Dendritic cell treated with granulocyte-macrophage colony-stimulating factor and Interleukin-4, amounts not matched to agents 40 ng/mL and 50 ng/mL, for 4 days (primary cell): ENCODE measurements at regions of chr17 and their contacts with region 1.

Region 1: GRCh38 chr17:7136266-7136877 is 21.8 kb upstream of the ASGR2 start:
- H3K4me3 Mint-ChIP-seq: peak overlapping the region; percentile 63
- H3K27ac Mint-ChIP-seq: peak overlapping the region; percentile 89
- H3K4me1 Mint-ChIP-seq: peaks cover 79% of the 10 kb centered on the region
- H3K27me3 Mint-ChIP-seq: no peaks in the 10 kb centered on the region

Region 2: DNA sequence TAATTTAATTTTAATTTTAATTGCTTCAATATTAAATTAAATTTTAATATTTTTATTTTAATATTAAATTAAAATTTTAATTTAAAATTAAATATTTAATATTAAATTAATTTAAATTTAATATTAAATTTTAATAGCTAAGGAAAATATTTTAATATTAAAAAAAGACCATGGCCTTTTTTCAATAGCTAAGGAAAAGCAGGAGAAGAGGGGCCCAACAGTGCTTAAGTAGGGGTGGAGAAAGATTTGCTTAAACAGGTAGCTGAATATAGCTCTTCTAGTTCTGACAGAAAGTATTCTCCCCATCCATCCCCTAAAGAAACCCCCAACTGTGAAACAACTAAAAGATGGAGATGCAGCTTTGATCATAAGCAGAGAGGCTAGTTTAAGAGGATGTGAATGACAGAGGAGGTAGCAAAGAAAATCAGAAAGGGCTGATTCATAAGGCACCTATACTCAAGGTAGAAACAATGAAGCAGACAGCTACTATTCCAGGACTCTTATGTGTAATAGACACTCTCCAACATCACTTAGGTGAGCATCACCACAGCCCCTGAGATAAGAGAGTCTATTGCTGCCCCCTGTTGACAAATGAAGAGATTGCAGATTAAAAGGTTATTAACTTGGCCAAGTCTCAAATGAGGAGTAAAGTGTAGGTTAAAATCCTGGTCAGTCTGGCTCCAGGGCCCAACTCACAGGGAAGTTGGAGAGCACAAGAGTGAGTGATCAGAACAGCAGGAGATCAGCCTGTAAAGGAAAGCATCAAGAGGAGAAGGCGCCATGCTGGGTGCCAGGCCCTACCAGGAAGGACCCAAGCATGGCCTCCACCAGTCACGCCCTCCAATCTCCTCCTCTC is 131.7 kb before region 1 on chr17:
- intact Hi-C with region 1: no loop called
- H3K4me3 Mint-ChIP-seq: no peak overlapping the region
- H3K27ac Mint-ChIP-seq: no peak overlapping the region
- H3K4me1 Mint-ChIP-seq: peaks cover 55% of the 10 kb centered on the region
- H3K27me3 Mint-ChIP-seq: no peaks in the 10 kb centered on the region

Region 3: DNA sequence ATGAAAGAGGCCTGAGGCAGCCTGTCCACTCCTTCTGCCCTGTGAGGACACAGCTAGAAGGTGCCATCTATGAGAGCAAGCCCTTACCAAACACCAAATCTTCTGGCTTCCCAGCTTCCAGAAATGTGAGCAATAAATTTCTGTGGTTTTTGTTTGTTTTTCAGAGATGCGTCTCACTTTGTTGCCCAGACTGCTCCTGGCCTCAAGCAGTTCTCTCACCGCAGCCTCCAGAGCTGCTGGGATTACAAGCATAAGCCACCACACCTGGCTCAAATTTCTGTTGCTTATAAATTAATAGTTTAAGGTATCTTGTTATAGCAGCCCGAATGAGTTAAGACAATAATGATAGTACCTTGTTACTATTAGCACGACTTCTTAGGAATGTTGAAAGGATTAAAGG is 80.0 kb before region 1 on chr17:
- intact Hi-C with region 1: loop called (anchors 1 kb)
- H3K4me3 Mint-ChIP-seq: no peak overlapping the region
- H3K27ac Mint-ChIP-seq: no peak overlapping the region
- H3K4me1 Mint-ChIP-seq: peaks cover 32% of the 10 kb centered on the region
- H3K27me3 Mint-ChIP-seq: no peaks in the 10 kb centered on the region

Region 4: GRCh38 chr17:7081341-7082062 is 54.9 kb before region 1 on chr17:
- intact Hi-C with region 1: loop called (anchors 2 kb)
- H3K4me3 Mint-ChIP-seq: no peak overlapping the region
- H3K27ac Mint-ChIP-seq: no peak overlapping the region
- H3K4me1 Mint-ChIP-seq: peaks cover 69% of the 10 kb centered on the region
- H3K27me3 Mint-ChIP-seq: no peaks in the 10 kb centered on the region

Region 5: DNA sequence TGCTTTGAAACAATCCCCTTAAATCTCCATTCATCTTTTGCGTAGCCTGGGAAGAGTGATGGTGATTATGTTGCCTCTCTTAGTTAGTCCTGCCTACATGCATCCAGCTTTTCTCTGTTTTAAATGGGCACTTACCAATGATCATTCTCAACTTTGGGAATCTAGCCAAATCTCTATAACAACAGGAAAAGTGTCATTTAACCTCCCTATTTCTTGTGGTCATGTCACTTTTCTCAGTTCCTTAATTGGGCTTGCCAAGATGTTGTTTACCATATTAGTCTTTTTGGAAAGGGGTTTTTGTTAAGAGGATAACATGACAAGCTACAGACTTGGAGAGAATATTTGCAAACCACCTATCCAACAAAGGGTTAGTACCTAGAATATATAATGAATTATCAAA is 40.7 kb before region 1 on chr17:
- intact Hi-C with region 1: loop called (anchors 1 kb)
- H3K4me3 Mint-ChIP-seq: peak overlapping the region; percentile 56
- H3K27ac Mint-ChIP-seq: peak overlapping the region; percentile 92
- H3K4me1 Mint-ChIP-seq: peaks cover 83% of the 10 kb centered on the region
- H3K27me3 Mint-ChIP-seq: no peaks in the 10 kb centered on the region

Region 6: GRCh38 chr17:7114875-7115614 is 21.3 kb before region 1 on chr17:
- intact Hi-C with region 1: loop called (anchors 2 kb)
- H3K4me3 Mint-ChIP-seq: peak overlapping the region; percentile 71
- H3K27ac Mint-ChIP-seq: no peak overlapping the region
- H3K4me1 Mint-ChIP-seq: peaks cover 35% of the 10 kb centered on the region
- H3K27me3 Mint-ChIP-seq: no peaks in the 10 kb centered on the region

Region 7: DNA sequence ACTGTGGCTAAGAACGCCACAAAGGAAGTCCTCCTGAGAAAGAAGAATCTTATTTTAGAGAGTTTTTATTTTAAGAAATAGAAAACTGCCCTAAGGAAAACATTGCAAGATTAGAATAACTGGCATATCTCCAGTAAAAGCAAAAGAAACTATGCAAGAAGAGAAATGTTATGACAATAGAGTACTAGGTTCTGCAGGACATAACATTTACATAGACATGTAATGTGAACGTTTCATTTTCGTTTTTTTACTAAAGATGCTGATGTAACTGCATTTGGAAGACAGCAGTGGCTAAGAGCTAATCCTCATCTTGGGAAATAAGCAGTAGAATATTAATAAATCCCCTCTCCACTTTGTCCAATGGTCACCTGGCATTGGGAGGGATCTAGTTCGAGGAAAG is 14.0 kb before region 1 on chr17:
- intact Hi-C with region 1: loop called (anchors 1 kb)
- H3K4me3 Mint-ChIP-seq: no peak overlapping the region
- H3K27ac Mint-ChIP-seq: peak overlapping the region; percentile 83
- H3K4me1 Mint-ChIP-seq: peaks cover 77% of the 10 kb centered on the region
- H3K27me3 Mint-ChIP-seq: no peaks in the 10 kb centered on the region

Region 8: GRCh38 chr17:7177196-7177953 is 41.0 kb after region 1 on chr17:
- intact Hi-C with region 1: loop called (anchors 1 kb)
- H3K4me3 Mint-ChIP-seq: peak overlapping the region; percentile 52
- H3K27ac Mint-ChIP-seq: no peak overlapping the region
- H3K4me1 Mint-ChIP-seq: peaks cover 8% of the 10 kb centered on the region
- H3K27me3 Mint-ChIP-seq: peaks cover 14% of the 10 kb centered on the region